ENCODE measurements at regions of chr2 and their contacts with region 1.

Region 1: GRCh38 chr2:85561317-85561979 is at the start of gene GGCX:
- DNase-seq: peak; percentile 96
- ATAC-seq: peak; percentile 95
- H3K4me3 ChIP-seq: peak within 1 kb of the TSS; percentile 88
- H3K27ac ChIP-seq: peak within 1 kb of the TSS; percentile 43
- H3K4me1 ChIP-seq: peaks cover 10% of the 10 kb centered on the region
- H3K27me3 ChIP-seq: no peaks in the 10 kb centered on the region
- CTCF ChIP-seq: no peak
- total RNA-seq, gene GGCX: 34.8 and 46.7 TPM in 2 replicates

Region 2: DNA sequence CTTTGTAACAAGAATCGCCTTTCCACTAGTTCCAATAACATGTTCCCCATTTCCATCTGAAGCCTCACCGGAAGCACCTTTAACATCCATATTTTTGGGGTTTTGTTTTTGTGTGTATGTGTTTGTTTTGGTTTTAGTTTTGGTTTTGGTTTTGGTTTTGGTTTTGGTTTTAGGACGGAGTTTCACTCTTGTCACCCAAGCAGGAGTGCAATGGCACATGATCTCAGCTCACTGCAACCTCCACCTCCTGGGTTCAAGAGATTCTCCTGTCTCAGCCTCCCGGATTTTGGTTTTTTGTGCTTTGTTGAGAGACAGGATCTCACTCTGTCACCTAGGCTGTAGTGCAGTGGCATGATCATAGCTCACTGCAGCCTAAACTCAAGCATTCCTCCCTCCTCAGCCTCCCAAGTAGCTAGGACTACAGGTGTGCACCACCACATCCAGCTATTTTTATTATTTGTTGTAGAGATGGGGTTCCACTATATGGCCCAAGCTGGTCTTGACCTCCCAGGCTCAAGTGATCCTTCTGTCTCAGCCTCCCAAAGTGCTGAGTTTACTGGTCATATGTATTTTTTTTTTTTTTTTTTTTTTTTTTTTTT is 269.9 kb before region 1 on chr2:
- CTCF ChIA-PET with region 1: no interaction called
- POLR2A ChIA-PET with region 1: no interaction called
- intact Hi-C with region 1: no loop called
- DNase-seq: no peak
- ATAC-seq: no peak
- H3K4me3 ChIP-seq: no peak overlapping the region
- H3K27ac ChIP-seq: no peak overlapping the region
- H3K4me1 ChIP-seq: peaks cover 31% of the 10 kb centered on the region
- H3K27me3 ChIP-seq: no peaks in the 10 kb centered on the region
- CTCF ChIP-seq: no peak

Region 3: GRCh38 chr2:85577386-85578242 is 16.2 kb after region 1 on chr2 and contains the start of gene VAMP8:
- CTCF ChIA-PET with region 1: no interaction called
- POLR2A ChIA-PET with region 1: no interaction called
- intact Hi-C with region 1: loop called (anchors 1 kb)
- DNase-seq: peak; percentile 80
- ATAC-seq: peak; percentile 90
- H3K4me3 ChIP-seq: peak within 1 kb of the TSS; percentile 73
- H3K27ac ChIP-seq: peak within 1 kb of the TSS; percentile 20
- H3K4me1 ChIP-seq: peaks cover 18% of the 10 kb centered on the region
- H3K27me3 ChIP-seq: no peaks in the 10 kb centered on the region
- CTCF ChIP-seq: no peak
- total RNA-seq, gene VAMP8: 141 and 142 TPM in 2 replicates

Measured in PC-3 (cell line).